Panc1 (cell line): ENCODE measurements at regions of chr18 and their contacts with region 1.

Region 1: DNA sequence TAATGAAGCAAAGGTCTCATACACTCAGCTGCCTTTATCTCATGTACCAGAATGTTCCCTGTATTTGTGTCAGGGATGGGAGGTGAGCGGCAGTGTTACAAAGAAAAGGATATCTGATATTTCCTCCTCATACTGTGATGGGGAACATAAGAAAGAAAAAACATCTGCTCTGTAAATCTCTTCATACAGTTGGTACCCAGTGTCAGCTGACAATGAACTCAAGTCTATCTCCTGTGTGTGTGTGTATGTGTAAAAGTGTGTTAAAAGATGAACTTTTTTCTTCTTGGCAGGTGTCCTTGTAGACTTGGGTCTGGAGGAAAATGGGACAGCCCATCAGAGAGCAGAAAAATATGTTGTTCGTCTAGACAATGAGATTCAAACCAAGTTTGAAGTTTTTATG is 127.8 kb downstream of the ESCO1 start:
- DNase-seq: no peak
- ATAC-seq: no peak
- H3K4me3 ChIP-seq: no peak overlapping the region
- H3K27ac ChIP-seq: no peak overlapping the region
- H3K4me1 ChIP-seq: no peaks in the 10 kb centered on the region
- H3K27me3 ChIP-seq: no peaks in the 10 kb centered on the region
- CTCF ChIP-seq: no peak

Region 2: GRCh38 chr18:21230436-21230835 is 242.3 kb before region 1 on chr18:
- CTCF ChIA-PET with region 1: no interaction called
- POLR2A ChIA-PET with region 1: interaction called, 15 read pairs
- in situ Hi-C with region 1: no loop called
- intact Hi-C with region 1: no loop called
- DNase-seq: no peak
- ATAC-seq: no peak
- H3K4me3 ChIP-seq: no peak overlapping the region
- H3K27ac ChIP-seq: no peak overlapping the region
- H3K4me1 ChIP-seq: no peaks in the 10 kb centered on the region
- H3K27me3 ChIP-seq: no peaks in the 10 kb centered on the region
- CTCF ChIP-seq: no peak

Region 3: DNA sequence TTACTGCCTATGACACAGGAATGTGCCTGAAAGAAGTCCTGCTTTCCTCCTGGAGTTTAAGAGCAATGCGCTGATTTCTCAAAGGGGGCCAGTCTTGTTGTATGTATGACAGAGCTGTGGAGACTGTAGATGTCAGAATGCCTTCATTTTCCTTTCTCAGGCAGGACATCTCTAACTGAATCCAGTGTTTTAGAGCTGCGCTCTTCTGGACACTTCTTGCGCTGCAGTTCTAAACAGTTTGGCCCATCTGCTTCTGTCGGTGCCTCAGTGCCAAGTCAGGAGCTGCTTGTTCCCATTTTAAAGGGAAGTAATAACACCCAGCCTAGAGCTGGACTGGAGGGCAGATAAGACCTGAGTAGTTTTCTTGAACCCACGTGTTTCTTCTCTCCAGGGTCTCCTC is 36.3 kb after region 1 on chr18:
- CTCF ChIA-PET with region 1: no interaction called
- POLR2A ChIA-PET with region 1: no interaction called
- in situ Hi-C with region 1: no loop called
- intact Hi-C with region 1: no loop called
- DNase-seq: no peak
- ATAC-seq: no peak
- H3K4me3 ChIP-seq: no peak overlapping the region
- H3K27ac ChIP-seq: no peak overlapping the region
- H3K4me1 ChIP-seq: no peaks in the 10 kb centered on the region
- H3K27me3 ChIP-seq: no peaks in the 10 kb centered on the region
- CTCF ChIP-seq: no peak; the same call in 1 of the 2 replicates